Uterus (tissue), 4 donors: ENCODE measurements at regions of chr21 and their contacts with region 1.

Region 1: DNA sequence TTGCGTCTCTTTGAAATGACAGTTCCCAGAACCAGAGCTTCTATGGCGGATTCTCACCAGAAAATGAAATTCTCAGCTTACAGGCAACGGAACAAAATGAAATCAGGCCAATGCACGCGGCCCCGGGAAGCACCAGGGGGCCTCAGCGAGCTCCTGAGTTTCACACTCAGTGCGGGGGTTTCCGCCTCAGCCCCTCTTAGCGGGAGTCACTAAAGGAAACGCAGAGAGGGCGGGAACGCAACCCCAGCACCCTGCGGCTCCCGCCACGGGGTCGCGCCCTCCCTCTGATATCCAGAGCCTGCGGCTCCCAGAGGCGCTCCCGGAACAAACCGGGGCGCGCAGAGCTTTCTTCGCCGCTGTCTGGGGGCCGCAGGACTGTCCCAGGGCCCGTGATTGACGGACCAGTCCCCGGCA is 7.9 kb upstream of the COL6A1 start:
- DNase-seq: peak; percentile 92 to 94
- H3K4me3 ChIP-seq: peak overlapping the region; percentile 31 to 60
- H3K27ac ChIP-seq: peak overlapping the region; percentile 96 to 98
- H3K4me1 ChIP-seq: peaks cover 14 to 29% of the 10 kb centered on the region in 2 donors
- H3K27me3 ChIP-seq: no peaks in the 10 kb centered on the region
- CTCF ChIP-seq: peak; percentile 74 to 83 (median 76)
- POLR2A ChIP-seq: peak; percentile 34 to 65

Region 2: GRCh38 chr21:45695086-45695485 is 278.6 kb before region 1 on chr21:
- intact Hi-C with region 1: no loop called
- DNase-seq: no peak
- H3K4me3 ChIP-seq: no peak overlapping the region
- H3K27ac ChIP-seq: no peak overlapping the region
- H3K4me1 ChIP-seq: no peaks in the 10 kb centered on the region
- H3K27me3 ChIP-seq: no peaks in the 10 kb centered on the region
- CTCF ChIP-seq: no peak
- POLR2A ChIP-seq: no peak

Region 3: DNA sequence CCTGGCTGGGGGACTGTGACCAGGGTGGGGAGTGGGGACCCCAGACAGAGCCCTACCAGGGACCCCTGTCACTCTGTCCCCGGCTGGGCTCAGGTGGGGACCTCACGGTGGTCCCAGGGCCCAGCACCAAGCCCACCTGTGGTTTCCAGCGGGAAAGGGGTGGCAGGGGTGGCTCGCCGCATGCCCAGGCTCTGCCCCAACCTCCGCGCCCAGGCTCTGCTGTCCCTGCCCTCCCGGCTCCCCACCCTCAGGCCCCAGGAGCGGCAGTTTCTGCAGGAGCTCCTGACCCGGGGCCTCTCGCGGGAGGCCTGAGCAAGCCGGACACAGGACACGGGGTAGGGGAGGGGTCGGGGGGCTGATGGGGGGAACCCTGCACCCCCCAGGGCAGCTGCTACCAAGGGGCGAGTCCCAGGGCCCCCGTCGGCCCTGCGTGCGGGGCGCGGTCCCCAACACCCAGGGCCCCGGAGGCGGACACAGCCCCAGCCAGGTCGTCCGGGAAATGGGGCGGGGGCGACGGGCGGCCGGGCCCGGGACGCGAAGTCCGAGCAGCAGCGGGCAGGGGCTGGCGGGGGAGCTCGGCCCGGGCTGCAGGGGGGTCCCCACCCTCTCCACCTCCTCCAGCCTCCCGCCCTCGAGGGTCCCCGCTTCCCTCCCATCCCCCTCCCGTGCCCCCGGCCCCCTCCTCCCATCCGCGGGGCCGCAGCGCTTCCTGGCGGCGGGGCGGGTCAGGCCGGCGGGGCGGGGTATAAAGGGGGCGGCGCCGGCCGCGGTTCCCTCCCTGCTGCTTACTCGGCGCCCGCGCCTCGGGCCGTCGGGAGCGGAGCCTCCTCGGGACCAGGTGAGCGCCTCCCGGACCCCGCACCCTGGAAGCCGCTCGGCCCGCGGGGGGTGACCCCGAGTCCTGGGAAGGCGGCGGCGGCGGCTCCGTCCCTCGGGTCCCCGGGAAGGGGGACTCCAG is 123.9 kb after region 1 on chr21 and contains the start of gene COL6A2:
- intact Hi-C with region 1: loop called (anchors 2 kb)
- DNase-seq: peak; percentile 77 to 85
- H3K4me3 ChIP-seq: peak within 1 kb of the TSS; percentile 55 to 97
- H3K27ac ChIP-seq: peak within 1 kb of the TSS; percentile 97 to 99
- H3K4me1 ChIP-seq: peaks cover 3 to 11% of the 10 kb centered on the region in 2 donors
- H3K27me3 ChIP-seq: no peaks in the 10 kb centered on the region
- CTCF ChIP-seq: peak; percentile 27 to 77 (median 52)
- POLR2A ChIP-seq: peak; percentile 63 to 96
- total RNA-seq, gene COL6A2: 321 to 1,200 (median 948) TPM

Region 4: GRCh38 chr21:46228345-46229051 is 254.8 kb after region 1 on chr21 and contains the start of gene LSS:
- intact Hi-C with region 1: loop called (anchors 10 kb)
- DNase-seq: peak; percentile 97
- H3K4me3 ChIP-seq: peak within 1 kb of the TSS; percentile 77 to 99
- H3K27ac ChIP-seq: peak within 1 kb of the TSS; percentile 71 to 94
- H3K4me1 ChIP-seq: peaks cover 0 to 17% of the 10 kb centered on the region in 2 donors
- H3K27me3 ChIP-seq: no peaks in the 10 kb centered on the region
- CTCF ChIP-seq: peak in 2 of 4 experiments; percentile 2 to 8
- POLR2A ChIP-seq: peak; percentile 26 to 59
- total RNA-seq, gene LSS: 35.4 to 94.0 (median 41.5) TPM